ENCODE measurements at regions of chr12 and their contacts with region 1.

Region 1: DNA sequence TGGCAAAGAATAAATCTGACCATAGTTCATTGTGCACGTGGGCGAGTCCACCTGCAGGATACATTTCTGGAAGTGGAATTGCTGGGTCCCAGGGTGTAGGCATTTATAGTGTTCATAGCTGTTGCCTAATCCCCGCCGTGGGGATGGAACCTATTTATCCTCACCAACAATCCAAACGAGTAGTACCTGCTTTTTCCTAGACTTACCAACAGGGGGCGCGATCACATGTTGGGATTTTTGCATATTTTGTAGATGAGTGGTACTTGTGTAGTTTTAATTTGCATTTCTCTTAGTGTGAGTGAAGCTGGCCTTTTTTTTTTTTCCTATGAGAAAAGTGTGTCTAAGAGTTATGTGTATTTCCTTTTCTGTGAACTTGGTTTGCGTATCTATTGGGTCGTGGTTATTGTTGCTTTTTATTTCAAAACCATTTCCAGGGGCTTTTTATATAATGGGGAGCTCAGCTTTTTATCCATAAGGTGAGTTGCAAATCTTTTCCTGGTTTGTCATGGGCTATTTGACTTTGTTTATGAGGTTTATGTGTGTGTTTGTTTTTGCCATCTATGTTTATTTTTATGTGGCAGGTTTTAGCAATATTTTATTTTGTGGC is 67.2 kb downstream of the CCDC92 start:
- DNase-seq: no peak
- ATAC-seq: peak; percentile 74 to 78
- H3K4me3 ChIP-seq: no peak overlapping the region
- H3K27ac ChIP-seq: no peak overlapping the region
- H3K4me1 ChIP-seq: no peaks in the 10 kb centered on the region
- H3K27me3 ChIP-seq: peaks cover 4% of the 10 kb centered on the region
- CTCF ChIP-seq: peak; percentile 78

Region 2: GRCh38 chr12:123983822-123984485 is 78.5 kb after region 1 on chr12:
- intact Hi-C with region 1: loop called (anchors 10 kb)
- DNase-seq: no peak
- ATAC-seq: peak; percentile 85 to 87
- H3K4me3 ChIP-seq: no peak overlapping the region
- H3K27ac ChIP-seq: peak overlapping the region; percentile 13
- H3K4me1 ChIP-seq: peaks cover 34% of the 10 kb centered on the region
- H3K27me3 ChIP-seq: no peaks in the 10 kb centered on the region
- CTCF ChIP-seq: peak; percentile 67

Measured in lower lobe of right lung (tissue), 2 donors.